Activated CD8-positive, alpha-beta T cell treated with anti-CD3 and anti-CD28 coated beads for 36 hours (primary cell): ENCODE measurements at regions of chr1 and their contacts with region 1.

Region 1: DNA sequence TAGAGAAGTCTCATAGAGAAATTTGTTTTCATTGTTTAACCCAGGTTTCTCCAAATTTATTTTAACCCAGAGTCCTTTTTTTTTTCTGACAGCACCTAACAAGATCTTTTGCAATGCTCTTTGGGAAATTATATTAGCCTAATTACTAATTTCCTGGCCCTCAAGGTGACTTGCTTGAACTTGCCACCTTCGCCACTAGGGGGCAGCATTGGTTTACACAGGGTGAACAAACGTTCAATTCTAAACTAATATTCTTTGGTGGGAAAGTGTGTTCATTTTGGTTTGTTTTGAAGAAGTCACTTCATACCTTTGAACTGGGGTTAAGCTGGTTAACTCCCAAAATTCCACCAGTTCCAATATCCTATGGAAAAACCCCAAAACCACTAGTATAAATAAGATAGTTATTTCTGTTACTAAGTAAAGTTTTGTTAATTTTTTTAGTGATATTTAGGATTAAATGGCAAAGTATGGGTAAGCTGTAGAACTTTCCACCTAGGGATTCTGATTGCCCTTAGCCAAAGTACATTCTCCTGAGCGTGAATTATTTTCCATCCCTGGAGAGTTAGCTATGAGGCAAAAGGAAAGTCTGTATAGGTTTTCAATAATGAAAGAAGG is 13.0 kb downstream of the CCDC190 start:
- DNase-seq: peak; percentile 89
- ATAC-seq: peak; percentile 65
- H3K4me3 Mint-ChIP-seq: no peak overlapping the region
- H3K27ac Mint-ChIP-seq: no peak overlapping the region
- H3K4me1 Mint-ChIP-seq: no peaks in the 10 kb centered on the region
- H3K27me3 Mint-ChIP-seq: peaks cover 7% of the 10 kb centered on the region
- CTCF ChIP-seq: peak; percentile 87

Region 2: GRCh38 chr1:162635418-162635817 is 212.5 kb before region 1 on chr1:
- CTCF ChIA-PET with region 1: no interaction called
- POLR2A ChIA-PET with region 1: no interaction called
- intact Hi-C with region 1: no loop called
- DNase-seq: no peak
- ATAC-seq: no peak
- H3K4me3 Mint-ChIP-seq: no peak overlapping the region
- H3K27ac Mint-ChIP-seq: no peak overlapping the region
- H3K4me1 Mint-ChIP-seq: peaks cover 2% of the 10 kb centered on the region
- H3K27me3 Mint-ChIP-seq: peaks cover 1% of the 10 kb centered on the region
- CTCF ChIP-seq: no peak

Region 3: DNA sequence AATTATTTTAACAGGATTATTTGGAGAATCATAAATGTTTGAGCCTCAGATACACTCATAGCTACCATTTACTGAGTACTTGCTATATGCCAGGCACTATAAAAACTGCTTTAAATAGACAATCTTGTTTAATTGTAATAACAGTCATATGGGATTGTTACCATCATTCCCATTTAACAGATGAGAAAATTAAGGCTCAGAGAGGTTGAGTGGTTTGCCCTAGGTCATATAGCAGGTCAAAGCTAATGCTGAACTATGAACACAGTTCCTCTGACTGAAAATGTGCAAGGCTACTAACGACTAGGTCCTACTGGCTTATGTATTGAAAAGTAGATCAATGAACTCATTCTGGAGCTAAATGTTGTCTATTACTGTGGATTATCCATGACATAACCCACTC is 152.3 kb before region 1 on chr1:
- CTCF ChIA-PET with region 1: no interaction called
- POLR2A ChIA-PET with region 1: no interaction called
- intact Hi-C with region 1: no loop called
- DNase-seq: no peak
- ATAC-seq: no peak
- H3K4me3 Mint-ChIP-seq: no peak overlapping the region
- H3K27ac Mint-ChIP-seq: no peak overlapping the region
- H3K4me1 Mint-ChIP-seq: no peaks in the 10 kb centered on the region
- H3K27me3 Mint-ChIP-seq: peaks cover 4% of the 10 kb centered on the region
- CTCF ChIP-seq: no peak

Region 4: DNA sequence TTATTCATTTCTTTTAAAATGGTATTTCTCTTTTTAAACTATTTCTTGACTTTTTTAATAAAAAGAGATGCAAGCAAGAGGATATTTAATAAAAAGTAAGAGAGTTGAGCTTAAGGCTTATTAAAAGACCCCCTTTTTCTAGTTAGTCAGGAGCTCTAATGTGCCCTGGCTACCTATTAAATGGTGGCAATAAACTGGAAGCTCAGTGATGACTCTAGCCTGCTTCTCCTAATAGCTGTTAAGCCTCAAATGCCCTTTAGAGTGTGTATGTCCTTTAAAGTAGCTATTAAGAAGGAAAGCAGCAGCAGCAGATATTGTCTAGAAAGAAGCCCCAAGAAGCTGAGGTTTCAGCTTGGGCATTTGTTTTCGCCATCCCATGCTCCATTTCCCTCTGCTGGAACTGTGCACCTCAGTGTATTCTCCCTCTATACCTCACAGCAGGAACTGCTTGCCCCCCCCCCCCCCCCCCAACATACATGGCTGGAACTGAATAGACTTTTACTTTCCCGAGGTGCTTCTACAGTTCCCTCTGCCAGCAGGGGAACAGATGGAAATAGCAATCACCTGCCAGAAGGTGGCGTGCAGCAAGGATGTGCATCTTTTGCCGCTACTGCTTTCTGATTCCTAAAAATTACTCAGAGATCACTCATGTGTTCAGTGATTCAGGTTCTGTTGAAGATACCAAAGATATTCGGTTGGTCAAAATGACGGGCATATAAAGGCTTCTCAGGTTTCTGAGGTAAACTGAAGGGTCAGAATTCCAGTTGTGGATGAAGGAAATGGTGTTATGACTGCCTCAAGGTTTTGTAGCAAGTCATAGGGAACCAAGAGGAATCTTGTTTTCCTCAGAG is 223.7 kb after region 1 on chr1:
- CTCF ChIA-PET with region 1: interaction called, 10 read pairs
- POLR2A ChIA-PET with region 1: no interaction called
- intact Hi-C with region 1: no loop called
- DNase-seq: peak; percentile 63
- ATAC-seq: peak; percentile 39
- H3K4me3 Mint-ChIP-seq: no peak overlapping the region
- H3K27ac Mint-ChIP-seq: no peak overlapping the region
- H3K4me1 Mint-ChIP-seq: no peaks in the 10 kb centered on the region
- H3K27me3 Mint-ChIP-seq: peaks cover 29% of the 10 kb centered on the region
- CTCF ChIP-seq: peak; percentile 66

Region 5: GRCh38 chr1:163085041-163085903 is 237.3 kb after region 1 on chr1:
- CTCF ChIA-PET with region 1: no interaction called
- POLR2A ChIA-PET with region 1: no interaction called
- intact Hi-C with region 1: no loop called
- DNase-seq: no peak
- ATAC-seq: no peak
- H3K4me3 Mint-ChIP-seq: no peak overlapping the region
- H3K27ac Mint-ChIP-seq: no peak overlapping the region
- H3K4me1 Mint-ChIP-seq: no peaks in the 10 kb centered on the region
- H3K27me3 Mint-ChIP-seq: peaks cover 3% of the 10 kb centered on the region
- CTCF ChIP-seq: no peak